ENCODE measurements at regions of chr17 and their contacts with region 1.

Region 1: DNA sequence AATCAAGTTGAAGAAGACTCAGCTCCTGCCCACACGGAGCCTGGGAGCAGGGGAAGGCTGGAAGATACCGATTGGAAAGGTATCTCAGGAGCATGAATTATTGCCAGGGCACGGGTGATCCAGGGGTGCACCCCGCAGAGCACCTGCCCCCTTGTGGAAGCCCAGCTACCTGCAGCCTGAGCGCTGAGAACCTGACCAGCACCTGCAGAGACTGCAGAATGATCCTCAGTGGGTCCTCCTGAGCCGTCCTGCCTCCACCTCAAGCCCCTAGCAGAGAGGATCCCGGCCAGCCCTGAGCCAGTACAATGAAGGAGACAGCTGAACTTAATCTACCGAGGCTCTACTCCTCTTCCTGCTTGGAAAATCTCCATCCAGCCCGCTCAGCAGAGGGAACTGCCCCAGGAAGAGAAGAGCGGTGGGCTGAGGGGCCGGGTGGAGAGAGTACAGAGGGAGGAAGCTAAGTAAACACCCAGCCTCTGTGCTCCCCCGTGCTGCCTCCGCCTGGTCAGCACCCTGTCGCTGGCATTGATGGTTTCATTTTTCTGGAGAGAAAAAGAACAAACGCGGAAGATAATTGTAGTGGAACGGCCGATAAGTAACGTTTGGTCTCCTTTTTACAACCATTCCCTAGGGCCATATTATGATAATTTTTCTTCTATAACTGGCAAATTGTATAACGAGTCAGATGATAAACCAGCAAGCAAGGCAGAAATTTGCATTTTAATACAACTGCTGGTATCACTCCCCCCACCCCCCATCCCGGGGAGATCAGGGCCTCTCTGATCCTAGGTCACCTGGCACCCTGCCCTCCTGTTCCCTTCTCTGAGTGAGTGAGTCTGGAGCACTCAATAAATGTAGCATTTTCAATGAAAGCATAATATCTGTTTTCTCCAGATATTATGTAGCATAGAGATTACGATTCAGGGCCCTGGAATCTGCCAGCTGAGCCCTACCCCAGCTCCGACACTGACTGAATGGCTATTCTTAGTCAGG is 204.5 kb upstream of the RPL38 start:
- DNase-seq: peak; percentile 22
- H3K4me3 ChIP-seq: no peak overlapping the region
- H3K27ac ChIP-seq: no peak overlapping the region
- H3K4me1 ChIP-seq: no peaks in the 10 kb centered on the region
- H3K27me3 ChIP-seq: no peaks in the 10 kb centered on the region
- CTCF ChIP-seq: peak; percentile 65 to 93

Region 2: DNA sequence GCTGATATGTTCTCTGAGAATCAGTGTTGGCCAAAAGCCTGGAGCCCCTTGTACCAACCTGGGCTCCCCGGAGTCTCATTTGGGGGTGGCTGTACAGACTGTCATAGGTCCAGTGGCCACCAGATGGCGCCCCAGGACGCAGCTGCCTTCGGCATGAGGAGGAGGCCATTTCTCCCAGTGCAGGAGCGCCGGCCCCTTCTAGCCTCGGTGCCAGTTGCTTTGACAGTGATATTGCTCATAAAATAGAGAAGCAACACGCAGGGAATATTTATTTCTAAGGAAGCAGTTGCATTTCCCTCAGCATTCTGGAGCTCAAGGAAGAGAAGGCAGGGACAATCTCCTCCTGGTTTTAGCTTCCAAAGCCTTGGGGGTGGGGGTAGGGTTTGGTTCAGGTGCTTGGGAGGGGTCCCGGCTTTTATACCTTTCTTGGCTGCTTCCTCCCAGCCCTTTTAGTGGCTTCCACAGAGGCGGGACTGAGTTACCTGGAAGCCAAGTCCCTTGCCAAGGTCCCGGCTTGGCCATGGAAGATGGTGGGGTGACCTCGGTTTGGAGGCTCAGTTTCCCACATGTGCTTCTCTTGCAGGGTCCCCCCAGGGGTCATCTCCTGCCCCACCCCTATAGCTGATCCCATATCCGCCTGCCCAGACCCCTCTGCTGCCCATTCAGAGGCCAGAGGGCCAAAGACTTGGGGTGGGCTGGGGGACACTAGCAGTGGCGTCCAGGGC is 569.3 kb before region 1 on chr17:
- CTCF ChIA-PET with region 1: interaction called, 3 read pairs
- dilution Hi-C with region 1: no loop called
- in situ Hi-C with region 1: no loop called
- intact Hi-C with region 1: loop called (anchors 1 kb)
- DNase-seq: peak; percentile 59
- H3K4me3 ChIP-seq: no peak overlapping the region
- H3K27ac ChIP-seq: no peak overlapping the region
- H3K4me1 ChIP-seq: no peaks in the 10 kb centered on the region
- H3K27me3 ChIP-seq: no peaks in the 10 kb centered on the region
- CTCF ChIP-seq: peak; percentile 91 to 96

Region 3: DNA sequence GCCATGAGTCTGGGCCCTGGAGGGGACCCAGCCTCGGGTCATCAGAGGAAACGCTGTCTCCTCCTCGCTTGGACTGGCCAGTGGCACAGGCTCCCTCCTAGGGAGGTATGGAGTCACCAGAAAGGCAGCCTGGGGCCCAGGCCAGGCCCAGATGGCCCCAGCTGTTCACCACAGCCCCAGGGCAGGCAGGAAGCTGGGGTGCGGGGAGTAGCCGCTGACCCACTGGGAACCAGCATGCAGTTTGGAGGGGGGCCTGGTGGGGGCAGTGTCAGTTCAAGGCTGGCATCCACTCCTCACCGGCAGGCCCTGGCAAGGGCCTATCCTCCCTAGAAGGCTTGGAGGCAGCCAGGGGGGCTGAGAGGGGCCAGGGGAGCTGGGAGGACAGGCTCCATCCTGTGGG is 403.5 kb before region 1 on chr17:
- CTCF ChIA-PET with region 1: no interaction called
- dilution Hi-C with region 1: no loop called
- in situ Hi-C with region 1: no loop called
- intact Hi-C with region 1: loop called (anchors 10 kb)
- DNase-seq: peak; percentile 51
- H3K4me3 ChIP-seq: no peak overlapping the region
- H3K27ac ChIP-seq: no peak overlapping the region
- H3K4me1 ChIP-seq: peaks cover 14% of the 10 kb centered on the region
- H3K27me3 ChIP-seq: no peaks in the 10 kb centered on the region
- CTCF ChIP-seq: peak; percentile 64 to 91

Region 4: DNA sequence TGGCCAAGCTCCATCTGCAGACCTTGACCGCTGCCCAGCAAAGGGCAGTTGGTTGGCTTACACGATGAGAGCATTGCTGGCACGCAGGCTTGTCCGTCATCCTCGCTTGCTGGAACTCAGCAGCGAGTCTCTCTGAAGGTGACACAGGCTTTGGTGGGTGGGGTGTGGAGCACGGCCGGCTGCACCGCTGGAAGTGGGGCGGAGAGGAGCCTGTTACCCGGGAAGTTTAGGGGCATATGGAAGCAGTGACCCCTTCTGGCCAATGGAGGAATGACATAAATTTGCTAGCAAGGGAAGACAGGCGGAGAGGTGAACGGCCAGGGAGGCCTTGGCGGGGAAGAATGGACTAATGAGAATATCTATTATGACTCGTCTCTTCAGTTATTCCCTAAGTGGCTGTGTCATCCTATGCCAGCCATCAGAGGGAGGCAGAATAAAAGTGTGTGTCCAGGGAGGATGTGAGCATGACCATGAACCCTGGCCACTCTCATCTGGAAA is 288.8 kb before region 1 on chr17:
- CTCF ChIA-PET with region 1: no interaction called
- dilution Hi-C with region 1: no loop called
- in situ Hi-C with region 1: no loop called
- intact Hi-C with region 1: loop called (anchors 2 kb)
- DNase-seq: peak; percentile 61
- H3K4me3 ChIP-seq: no peak overlapping the region
- H3K27ac ChIP-seq: no peak overlapping the region
- H3K4me1 ChIP-seq: peaks cover 25% of the 10 kb centered on the region
- H3K27me3 ChIP-seq: no peaks in the 10 kb centered on the region
- CTCF ChIP-seq: peak; percentile 81 to 86

Region 5: DNA sequence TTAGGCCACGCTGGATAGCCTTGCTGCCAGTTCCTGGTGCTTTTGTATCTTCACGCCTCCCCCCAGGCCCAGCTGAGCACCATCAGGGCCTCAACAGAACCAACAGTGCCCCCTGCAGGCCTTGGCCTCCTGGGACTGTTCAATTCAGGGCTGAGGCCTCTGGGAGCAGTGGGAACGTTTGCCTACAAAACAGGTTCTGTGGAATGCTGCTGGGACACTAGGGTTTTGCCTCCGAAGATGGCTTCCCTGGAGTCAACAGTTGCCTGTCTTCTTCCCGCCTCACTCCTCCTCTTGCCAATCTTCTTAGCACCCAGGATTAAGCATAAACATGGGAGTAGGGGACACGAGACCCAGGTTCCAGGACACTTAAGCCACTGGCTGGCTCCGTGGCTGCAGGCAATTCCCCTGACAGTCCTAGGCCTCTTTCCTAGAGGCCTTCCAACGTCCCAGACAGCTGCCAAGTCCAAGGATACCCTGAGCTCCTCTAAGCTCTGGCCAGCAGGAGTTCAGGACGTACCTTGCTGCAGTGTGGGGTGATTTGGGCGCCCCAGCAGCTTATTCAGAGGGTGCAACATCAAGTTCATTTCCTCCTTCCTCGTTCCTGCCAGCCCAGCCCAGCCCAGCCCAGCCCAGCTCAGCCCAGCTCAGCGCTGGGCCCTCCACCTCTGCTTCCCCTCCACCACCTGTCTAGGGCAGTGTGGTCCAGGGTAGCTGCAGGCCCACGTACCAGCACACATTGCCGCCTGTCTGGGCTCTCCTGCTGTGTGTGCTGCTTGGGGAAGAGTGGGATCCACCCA is 42.1 kb before region 1 on chr17:
- CTCF ChIA-PET with region 1: no interaction called
- dilution Hi-C with region 1: loop called (anchors 5 kb)
- in situ Hi-C with region 1: no loop called
- intact Hi-C with region 1: no loop called
- DNase-seq: peak; percentile 12
- H3K4me3 ChIP-seq: no peak overlapping the region
- H3K27ac ChIP-seq: no peak overlapping the region
- H3K4me1 ChIP-seq: peaks cover 4% of the 10 kb centered on the region
- H3K27me3 ChIP-seq: peaks cover 12% of the 10 kb centered on the region
- CTCF ChIP-seq: peak; percentile 45 to 54

Measured in mammary epithelial cell (primary cell).